CD8-positive, alpha-beta T cell (primary cell): ENCODE measurements at regions of chr3 and their contacts with region 1.

Region 1: GRCh38 chr3:138118612-138119422 is 3.4 kb upstream of the DZIP1L start:
- DNase-seq: peak in 7 of 9 experiments; percentile 24 to 56 (median 39)
- ATAC-seq: no peak
- H3K4me3 ChIP-seq: no peak overlapping the region
- H3K4me3 Mint-ChIP-seq: no peak overlapping the region
- H3K27ac ChIP-seq: no peak overlapping the region
- H3K27ac Mint-ChIP-seq: no peak overlapping the region
- H3K4me1 ChIP-seq: peaks cover 4% of the 10 kb centered on the region
- H3K4me1 Mint-ChIP-seq: peaks cover 8% of the 10 kb centered on the region
- H3K27me3 ChIP-seq: peaks cover 0 to 7% of the 10 kb centered on the region in 2 experiments
- H3K27me3 Mint-ChIP-seq: peaks cover 31% of the 10 kb centered on the region
- CTCF ChIP-seq: peak; percentile 58

Region 2: GRCh38 chr3:137709011-137709601 is 409.7 kb before region 1 on chr3:
- CTCF ChIA-PET with region 1: no interaction called
- POLR2A ChIA-PET with region 1: no interaction called
- intact Hi-C with region 1: no loop called
- DNase-seq: no peak
- ATAC-seq: no peak
- H3K4me3 ChIP-seq: no peak overlapping the region
- H3K4me3 Mint-ChIP-seq: no peak overlapping the region
- H3K27ac ChIP-seq: no peak overlapping the region
- H3K27ac Mint-ChIP-seq: no peak overlapping the region
- H3K4me1 ChIP-seq: no peaks in the 10 kb centered on the region
- H3K4me1 Mint-ChIP-seq: no peaks in the 10 kb centered on the region
- H3K27me3 ChIP-seq: no peaks in the 10 kb centered on the region
- H3K27me3 Mint-ChIP-seq: peaks cover 8% of the 10 kb centered on the region
- CTCF ChIP-seq: no peak

Region 3: GRCh38 chr3:138148503-138148902 is 29.7 kb after region 1 on chr3:
- CTCF ChIA-PET with region 1: interaction called, 10 read pairs
- POLR2A ChIA-PET with region 1: no interaction called
- intact Hi-C with region 1: no loop called
- DNase-seq: no peak
- ATAC-seq: no peak
- H3K4me3 ChIP-seq: no peak overlapping the region
- H3K4me3 Mint-ChIP-seq: no peak overlapping the region
- H3K27ac ChIP-seq: no peak overlapping the region
- H3K27ac Mint-ChIP-seq: no peak overlapping the region
- H3K4me1 ChIP-seq: no peaks in the 10 kb centered on the region
- H3K4me1 Mint-ChIP-seq: no peaks in the 10 kb centered on the region
- H3K27me3 ChIP-seq: peaks cover 0 to 2% of the 10 kb centered on the region in 2 experiments
- H3K27me3 Mint-ChIP-seq: no peaks in the 10 kb centered on the region
- CTCF ChIP-seq: no peak

Region 4: GRCh38 chr3:138271189-138271794 is 152.5 kb after region 1 on chr3:
- CTCF ChIA-PET with region 1: no interaction called
- POLR2A ChIA-PET with region 1: no interaction called
- intact Hi-C with region 1: no loop called
- DNase-seq: no peak
- ATAC-seq: no peak
- H3K4me3 ChIP-seq: no peak overlapping the region
- H3K4me3 Mint-ChIP-seq: no peak overlapping the region
- H3K27ac ChIP-seq: no peak overlapping the region
- H3K27ac Mint-ChIP-seq: no peak overlapping the region
- H3K4me1 ChIP-seq: no peaks in the 10 kb centered on the region
- H3K4me1 Mint-ChIP-seq: no peaks in the 10 kb centered on the region
- H3K27me3 ChIP-seq: no peaks in the 10 kb centered on the region
- H3K27me3 Mint-ChIP-seq: no peaks in the 10 kb centered on the region
- CTCF ChIP-seq: no peak